Keratinocyte (primary cell): ENCODE measurements at regions of chr18 and their contacts with region 1.

Region 1: DNA sequence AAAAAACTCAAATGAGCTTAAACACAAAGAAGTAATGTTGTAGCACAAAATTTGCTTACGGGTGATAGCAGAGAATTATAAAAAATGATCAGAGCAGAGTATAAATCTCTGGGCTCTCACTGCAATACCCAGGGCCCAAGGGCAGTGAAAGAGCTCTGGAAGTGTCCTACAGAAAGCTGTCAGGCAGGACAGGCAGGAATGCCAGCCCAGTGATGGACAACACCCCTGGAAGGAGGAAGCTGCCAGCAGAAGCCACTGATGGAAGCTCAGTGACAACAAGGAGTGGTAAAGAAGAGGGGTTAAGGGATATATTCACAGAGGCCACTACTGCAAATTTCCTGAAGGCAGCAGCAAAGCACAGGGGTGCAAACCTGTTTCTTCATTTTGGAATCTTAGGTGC is 214.9 kb downstream of the L3MBTL4 start:
- DNase-seq: no peak
- H3K4me3 ChIP-seq: no peak overlapping the region
- H3K27ac ChIP-seq: no peak overlapping the region
- H3K4me1 ChIP-seq: peaks cover 2% of the 10 kb centered on the region
- H3K27me3 ChIP-seq: no peaks in the 10 kb centered on the region
- CTCF ChIP-seq: no peak

Region 2: GRCh38 chr18:6158958-6159357 is 40.8 kb before region 1 on chr18:
- dilution Hi-C with region 1: loop called (anchors 5 kb)
- DNase-seq: no peak
- H3K4me3 ChIP-seq: no peak overlapping the region
- H3K27ac ChIP-seq: no peak overlapping the region
- H3K4me1 ChIP-seq: no peaks in the 10 kb centered on the region
- H3K27me3 ChIP-seq: no peaks in the 10 kb centered on the region
- CTCF ChIP-seq: no peak